A673 (cell line): ENCODE measurements at regions of chr22 and their contacts with region 1.

Region 1: GRCh38 chr22:35016909-35017308 is 49.0 kb upstream of the ISX start:
- DNase-seq: no peak
- H3K4me3 ChIP-seq: no peak overlapping the region
- H3K27ac ChIP-seq: no peak overlapping the region
- H3K4me1 ChIP-seq: no peaks in the 10 kb centered on the region
- H3K27me3 ChIP-seq: no peaks in the 10 kb centered on the region
- CTCF ChIP-seq: no peak

Region 2: DNA sequence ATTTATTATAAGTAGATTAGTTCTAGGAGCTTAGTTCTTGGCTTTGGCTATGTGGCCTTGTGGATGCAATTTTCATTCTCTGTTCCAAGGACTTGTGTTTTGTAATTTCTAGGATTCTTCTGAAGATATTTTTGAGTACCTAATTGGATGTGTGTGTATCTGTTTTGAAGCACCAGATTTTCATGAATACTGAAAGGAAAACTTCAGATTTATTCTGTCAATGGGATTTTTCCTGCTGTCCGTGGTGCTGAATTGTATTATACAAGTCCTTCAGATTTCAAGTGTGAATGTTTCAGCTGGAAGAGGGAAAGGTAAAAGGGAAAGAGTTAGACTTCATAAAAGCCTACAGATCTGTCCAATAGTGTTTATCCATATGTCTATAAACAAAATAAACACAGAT is 1940.6 kb before region 1 on chr22:
- CTCF ChIA-PET with region 1: interaction called, 11 read pairs
- POLR2A ChIA-PET with region 1: no interaction called
- intact Hi-C with region 1: no loop called
- DNase-seq: no peak
- H3K4me3 ChIP-seq: no peak overlapping the region
- H3K27ac ChIP-seq: no peak overlapping the region
- H3K4me1 ChIP-seq: peaks cover 5% of the 10 kb centered on the region
- H3K27me3 ChIP-seq: no peaks in the 10 kb centered on the region
- CTCF ChIP-seq: no peak

Region 3: DNA sequence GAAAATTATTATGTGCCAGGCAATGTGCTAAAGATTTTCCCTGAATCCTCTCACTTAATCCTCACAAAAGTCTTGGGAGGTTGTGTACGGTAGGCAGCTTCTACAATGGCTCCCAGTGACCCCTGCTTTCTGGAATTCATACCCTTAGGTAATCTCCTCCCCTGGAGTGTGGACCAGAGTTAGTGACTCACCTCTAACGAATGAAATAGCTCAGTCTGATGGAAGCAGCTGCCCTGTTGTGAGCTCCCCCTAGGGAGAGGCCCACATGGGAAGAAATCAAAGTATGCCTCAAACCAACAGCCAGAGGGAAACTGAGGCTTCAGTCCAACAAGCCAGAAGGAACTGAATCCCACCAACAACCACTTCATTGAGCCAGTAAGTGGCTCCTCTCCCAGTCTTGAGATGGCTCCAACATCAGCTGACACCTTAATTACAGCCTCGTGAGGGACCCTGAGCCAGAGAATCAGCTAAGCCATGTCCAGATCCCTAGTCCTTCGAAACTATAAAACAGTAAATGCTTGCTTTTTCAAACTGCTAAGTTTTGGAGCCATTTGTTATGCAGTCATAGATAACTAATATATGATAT is 49.8 kb before region 1 on chr22:
- CTCF ChIA-PET with region 1: no interaction called
- POLR2A ChIA-PET with region 1: no interaction called
- intact Hi-C with region 1: no loop called
- DNase-seq: no peak
- H3K4me3 ChIP-seq: no peak overlapping the region
- H3K27ac ChIP-seq: no peak overlapping the region
- H3K4me1 ChIP-seq: no peaks in the 10 kb centered on the region
- H3K27me3 ChIP-seq: no peaks in the 10 kb centered on the region
- CTCF ChIP-seq: no peak